A549 (cell line): ENCODE measurements at regions of chr9 and their contacts with region 1.

Region 1: DNA sequence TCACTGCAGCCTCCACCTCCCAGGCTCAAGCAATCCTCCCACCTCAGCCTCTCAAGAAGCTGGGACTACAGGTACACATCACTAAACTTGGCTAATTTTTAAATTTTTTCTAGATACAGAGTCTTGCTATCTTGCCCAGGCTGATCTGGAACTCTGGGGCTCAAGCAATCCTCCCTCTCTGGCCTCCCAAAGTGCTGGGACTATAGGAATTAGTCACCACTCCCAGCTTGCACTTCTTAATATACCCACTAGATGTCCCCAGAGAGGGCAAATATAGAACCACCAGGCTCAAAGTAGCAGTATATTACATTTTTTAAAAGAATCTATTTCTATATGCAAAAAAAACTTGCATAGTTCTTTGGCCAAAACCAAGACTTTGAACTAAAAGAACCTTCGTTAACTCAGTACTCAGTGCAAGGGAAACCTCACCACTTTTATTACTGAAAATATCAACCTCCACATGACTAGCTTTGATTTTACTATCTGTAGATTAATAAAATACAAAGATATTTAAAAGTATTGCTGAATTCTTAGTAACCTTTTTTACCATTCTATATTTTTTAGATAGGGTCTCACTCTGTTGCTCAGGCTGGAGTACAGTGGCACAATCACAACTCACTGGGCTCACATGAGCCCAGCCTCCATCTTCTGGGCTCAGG is 25.8 kb upstream of the HSD17B3 start:
- DNase-seq: peak; percentile 44 to 50
- ATAC-seq: peak; percentile 64 to 89; a peak in 4 of 6 replicates
- H3K4me3 ChIP-seq: no peak overlapping the region
- H3K27ac ChIP-seq: peak overlapping the region in 1 of 2 experiments; percentile 32; a peak in 2 of 6 replicates
- H3K4me1 ChIP-seq: peaks cover 9% of the 10 kb centered on the region
- CTCF ChIP-seq: peak; percentile 77
- EP300 ChIP-seq: no peak
- POLR2A ChIP-seq: no peak
- RAD21 ChIP-seq: peak; percentile 76 to 81

Region 2: DNA sequence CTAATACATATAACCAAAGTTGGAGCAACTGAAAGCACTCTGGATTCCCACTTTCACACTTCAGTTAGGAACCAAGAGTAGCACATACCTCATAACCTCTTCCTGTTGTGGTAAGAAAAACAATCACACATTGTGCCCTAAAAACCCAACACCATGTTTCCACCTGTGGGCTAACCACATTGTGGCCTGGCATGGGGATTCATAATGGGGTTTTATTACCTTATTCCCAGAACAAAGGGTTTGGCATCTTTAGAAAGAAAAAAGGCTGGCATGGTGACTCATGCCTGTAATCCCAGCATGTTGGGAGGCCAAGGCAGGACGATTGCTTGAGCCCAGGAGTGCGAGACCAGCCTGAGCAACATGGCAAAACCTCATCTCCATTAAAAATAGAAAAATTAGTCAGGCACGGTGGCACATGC is 86.4 kb before region 1 on chr9:
- CTCF ChIA-PET with region 1: no interaction called
- POLR2A ChIA-PET with region 1: no interaction called
- DNase-seq: no peak
- ATAC-seq: no peak
- H3K4me3 ChIP-seq: no peak overlapping the region
- H3K27ac ChIP-seq: no peak overlapping the region
- H3K4me1 ChIP-seq: no peaks in the 10 kb centered on the region
- CTCF ChIP-seq: no peak
- EP300 ChIP-seq: no peak
- POLR2A ChIP-seq: no peak
- RAD21 ChIP-seq: no peak

Region 3: GRCh38 chr9:96309850-96310249 is 18.0 kb before region 1 on chr9:
- CTCF ChIA-PET with region 1: interaction called, 11 read pairs
- POLR2A ChIA-PET with region 1: no interaction called
- DNase-seq: no peak
- ATAC-seq: no peak
- H3K4me3 ChIP-seq: no peak overlapping the region
- H3K27ac ChIP-seq: no peak overlapping the region
- H3K4me1 ChIP-seq: no peaks in the 10 kb centered on the region
- CTCF ChIP-seq: no peak
- EP300 ChIP-seq: no peak
- POLR2A ChIP-seq: no peak
- RAD21 ChIP-seq: no peak

Region 4: DNA sequence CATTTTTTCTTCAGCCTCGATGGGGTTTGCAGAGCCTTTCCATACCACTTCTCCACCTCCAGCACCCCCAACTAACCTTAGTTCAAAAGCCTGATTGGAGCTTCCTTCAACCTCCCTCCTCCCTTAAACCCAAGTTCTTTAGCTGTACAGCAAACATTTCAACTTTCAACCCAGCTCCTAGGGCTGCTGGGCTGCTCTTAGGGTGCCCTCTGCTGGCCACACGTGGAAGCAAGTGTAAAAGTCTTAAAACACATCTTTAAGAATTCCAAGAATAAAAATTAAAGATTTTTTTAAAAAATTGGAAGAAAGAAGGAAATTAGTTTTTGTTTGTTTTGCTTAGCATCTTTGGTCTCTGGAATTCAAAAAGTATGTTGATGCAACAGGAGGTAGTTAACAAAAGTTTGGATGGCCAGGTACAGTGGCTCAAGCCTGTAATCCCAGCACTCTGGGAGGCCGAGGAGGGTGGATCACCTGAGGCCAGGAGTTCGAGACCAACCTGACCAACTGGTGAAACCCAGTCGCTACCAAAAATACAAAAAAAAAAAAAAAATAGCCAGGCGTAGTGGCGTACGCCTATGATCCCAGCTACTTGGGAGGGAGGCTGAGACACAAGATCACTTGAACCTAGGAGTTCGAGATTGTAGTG is 10.4 kb before region 1 on chr9:
- CTCF ChIA-PET with region 1: interaction called, 30 read pairs
- POLR2A ChIA-PET with region 1: no interaction called
- DNase-seq: peak; percentile 60 to 69
- ATAC-seq: peak; percentile 50 to 89; a peak in 4 of 6 replicates
- H3K4me3 ChIP-seq: no peak overlapping the region
- H3K27ac ChIP-seq: no peak overlapping the region
- H3K4me1 ChIP-seq: no peaks in the 10 kb centered on the region; the same call in 2 of the 3 replicates
- CTCF ChIP-seq: peak; percentile 87
- EP300 ChIP-seq: no peak
- POLR2A ChIP-seq: no peak
- RAD21 ChIP-seq: peak; percentile 83 to 84

Region 5: GRCh38 chr9:96376891-96377874 is 49.4 kb after region 1 on chr9:
- CTCF ChIA-PET with region 1: interaction called, 18 read pairs
- POLR2A ChIA-PET with region 1: no interaction called
- DNase-seq: no peak
- ATAC-seq: peak; percentile 60 to 62; a peak in 5 of 6 replicates
- H3K4me3 ChIP-seq: no peak overlapping the region
- H3K27ac ChIP-seq: peak overlapping the region; percentile 56 to 76
- H3K4me1 ChIP-seq: peaks cover 34% of the 10 kb centered on the region
- CTCF ChIP-seq: no peak
- EP300 ChIP-seq: no peak
- POLR2A ChIP-seq: no peak
- RAD21 ChIP-seq: no peak

Region 6: DNA sequence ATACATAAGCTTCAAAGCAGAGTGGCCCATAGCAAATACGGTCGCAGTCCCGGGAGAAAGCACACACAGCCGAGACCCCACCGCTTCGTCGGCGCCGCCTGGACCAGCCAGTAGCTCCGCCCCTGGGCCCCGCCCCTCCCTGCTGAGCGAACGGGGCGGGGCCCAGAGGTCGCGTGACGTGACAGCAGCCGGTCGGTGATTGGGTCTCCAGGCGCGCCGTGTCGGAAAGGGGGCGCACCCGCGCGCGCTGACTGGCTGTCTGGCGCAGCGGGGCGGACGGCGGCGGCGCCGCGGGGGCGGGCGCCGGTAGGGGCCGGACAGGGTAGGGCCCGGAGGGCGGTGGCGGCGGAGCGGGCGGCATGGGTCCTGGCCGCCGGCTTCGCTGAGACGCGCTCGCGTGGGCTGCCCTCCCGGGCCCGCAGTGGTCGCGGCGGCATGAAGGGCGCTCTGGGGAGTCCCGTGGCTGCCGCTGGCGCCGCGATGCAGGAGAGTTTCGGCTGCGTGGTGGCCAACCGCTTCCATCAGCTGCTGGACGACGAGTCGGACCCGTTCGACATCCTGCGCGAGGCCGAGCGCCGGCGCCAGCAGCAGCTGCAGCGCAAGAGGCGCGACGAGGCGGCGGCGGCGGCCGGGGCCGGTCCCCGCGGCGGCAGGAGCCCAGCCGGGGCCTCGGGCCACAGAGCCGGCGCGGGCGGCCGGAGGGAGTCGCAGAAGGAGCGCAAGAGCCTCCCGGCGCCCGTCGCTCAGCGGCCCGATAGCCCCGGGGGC is 122.2 kb after region 1 on chr9 and contains the start of gene HABP4:
- CTCF ChIA-PET with region 1: interaction called, 12 read pairs
- POLR2A ChIA-PET with region 1: interaction called, 5 read pairs
- DNase-seq: peak; percentile 92
- ATAC-seq: peak; percentile 93 to 98
- H3K4me3 ChIP-seq: peak within 1 kb of the TSS; percentile 71
- H3K27ac ChIP-seq: peak within 1 kb of the TSS; percentile 76 to 95
- H3K4me1 ChIP-seq: peaks cover 12% of the 10 kb centered on the region; the same call in 1 of the 3 replicates
- CTCF ChIP-seq: no peak
- EP300 ChIP-seq: no peak
- POLR2A ChIP-seq: peak; percentile 82
- RAD21 ChIP-seq: no peak
- polyA plus RNA-seq, gene HABP4: 7.3 and 12.4 TPM in 2 replicates